GM12878 (cell line): ENCODE measurements at regions of chr11 and their contacts with region 1.

Region 1: DNA sequence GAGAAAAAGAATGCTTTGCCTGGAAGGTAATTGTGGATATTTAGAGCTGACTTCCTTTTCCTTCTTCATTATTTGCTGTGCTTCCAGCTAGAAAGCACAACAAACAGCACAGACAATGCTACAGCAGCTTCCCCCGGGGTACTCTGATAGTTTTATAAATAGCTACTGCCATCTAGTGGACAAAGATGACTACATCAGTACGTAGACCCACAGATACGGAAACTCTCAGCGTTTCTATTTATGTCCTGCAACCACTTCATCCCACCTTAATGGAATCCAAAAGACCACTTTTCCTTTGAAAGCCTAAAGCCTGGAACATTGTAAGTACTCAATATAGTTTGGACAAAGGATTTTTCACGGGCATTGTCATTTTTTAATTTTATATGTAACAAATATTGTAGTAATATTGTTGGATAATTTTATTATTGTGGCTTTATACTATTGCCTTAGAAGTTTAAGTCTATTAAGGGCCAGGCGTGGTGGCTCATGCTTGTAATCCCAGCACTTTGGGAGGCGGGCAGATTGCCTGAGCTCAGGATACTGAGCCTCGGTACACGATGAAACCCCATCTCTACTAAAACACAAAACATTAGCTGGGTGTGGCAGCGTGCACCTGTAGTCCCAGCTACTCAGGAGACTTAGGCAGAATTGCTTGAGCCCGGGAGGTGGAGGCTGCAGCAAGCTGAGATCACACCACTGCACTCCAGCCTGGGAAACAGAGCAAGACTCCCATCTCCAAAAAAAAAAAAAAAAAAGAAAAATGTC is 7.5 kb downstream of the HSPA8 start:
- DNase-seq: no peak
- ATAC-seq: peak; percentile 87
- H3K4me3 ChIP-seq: no peak overlapping the region
- H3K27ac ChIP-seq: no peak overlapping the region
- H3K4me1 ChIP-seq: no peaks in the 10 kb centered on the region; the same call in 1 of the 2 replicates
- H3K27me3 ChIP-seq: no peaks in the 10 kb centered on the region
- CTCF ChIP-seq: peak; percentile 61 to 74 (median 63)
- EP300 ChIP-seq: no peak
- POLR2A ChIP-seq: no peak
- RAD21 ChIP-seq: peak; percentile 58

Region 2: DNA sequence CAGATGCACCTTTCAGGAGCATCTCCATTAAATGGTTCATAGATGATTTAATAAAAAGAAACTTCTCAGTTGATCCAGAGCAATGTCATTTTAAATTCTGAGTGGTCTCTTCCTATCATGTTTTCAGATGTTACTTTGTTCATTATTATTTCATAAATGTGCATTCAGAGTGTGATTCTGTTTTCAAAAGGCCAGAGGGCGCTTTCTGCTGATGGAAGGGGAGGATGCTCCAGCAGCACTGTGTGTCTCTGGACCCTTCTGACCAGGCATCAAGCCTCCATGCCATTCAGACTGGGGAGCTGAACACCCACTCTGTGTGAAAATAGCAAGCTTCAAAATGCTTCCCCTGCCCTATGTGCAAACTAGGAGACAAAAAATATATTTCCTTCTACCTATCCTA is 240.1 kb before region 1 on chr11:
- CTCF ChIA-PET with region 1: interaction called, 25 read pairs
- POLR2A ChIA-PET with region 1: no interaction called
- RAD21 ChIA-PET with region 1: interaction called, 12 read pairs
- SMC1A ChIA-PET with region 1: interaction called, 8 read pairs
- in situ Hi-C with region 1: no loop called
- intact Hi-C with region 1: no loop called
- DNase-seq: no peak
- ATAC-seq: peak; percentile 93
- H3K4me3 ChIP-seq: no peak overlapping the region
- H3K27ac ChIP-seq: no peak overlapping the region
- H3K4me1 ChIP-seq: no peaks in the 10 kb centered on the region; the same call in 1 of the 2 replicates
- H3K27me3 ChIP-seq: no peaks in the 10 kb centered on the region
- CTCF ChIP-seq: peak; percentile 22 to 51 (median 28); a peak in 3 of 6 replicates
- EP300 ChIP-seq: no peak
- POLR2A ChIP-seq: no peak
- RAD21 ChIP-seq: peak; percentile 60

Region 3: DNA sequence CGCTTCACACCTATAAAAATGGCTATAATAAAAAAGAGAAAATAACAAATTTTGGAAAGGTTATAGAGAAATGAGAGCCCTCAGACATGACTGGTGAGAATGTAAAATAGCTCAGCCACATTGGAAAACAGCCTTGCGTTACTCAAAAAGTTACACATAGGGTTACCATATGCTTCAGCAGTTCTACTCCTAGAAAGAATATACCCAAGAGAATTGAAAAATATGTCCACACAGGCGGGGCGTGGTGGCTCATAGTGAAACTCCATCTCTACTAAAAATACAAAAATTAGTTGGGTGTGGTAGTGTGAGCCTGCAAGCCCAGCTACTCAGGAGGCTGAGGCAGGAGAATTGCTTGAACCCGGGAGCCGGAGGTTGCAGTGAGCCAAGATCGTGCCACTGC is 179.5 kb before region 1 on chr11:
- CTCF ChIA-PET with region 1: interaction called, 12 read pairs
- POLR2A ChIA-PET with region 1: interaction called, 10 read pairs
- RAD21 ChIA-PET with region 1: interaction called, 12 read pairs
- SMC1A ChIA-PET with region 1: interaction called, 14 read pairs
- in situ Hi-C with region 1: no loop called
- intact Hi-C with region 1: no loop called
- DNase-seq: peak; percentile 52
- ATAC-seq: peak; percentile 79
- H3K4me3 ChIP-seq: 0 out of 2 replicates have a peak overlapping the region, but pooled peaks have one; percentile 25
- H3K27ac ChIP-seq: no peak overlapping the region
- H3K4me1 ChIP-seq: peaks cover 3% of the 10 kb centered on the region; the same call in 1 of the 2 replicates
- H3K27me3 ChIP-seq: no peaks in the 10 kb centered on the region
- CTCF ChIP-seq: no peak
- EP300 ChIP-seq: no peak
- POLR2A ChIP-seq: no peak
- RAD21 ChIP-seq: no peak

Region 4: GRCh38 chr11:123069908-123070821 is 15.7 kb after region 1 on chr11:
- CTCF ChIA-PET with region 1: interaction called, 41 read pairs
- POLR2A ChIA-PET with region 1: interaction called, 15 read pairs
- RAD21 ChIA-PET with region 1: interaction called, 12 read pairs
- SMC1A ChIA-PET with region 1: interaction called, 25 read pairs
- in situ Hi-C with region 1: no loop called
- intact Hi-C with region 1: no loop called
- DNase-seq: no peak
- ATAC-seq: peak; percentile 72
- H3K4me3 ChIP-seq: peak overlapping the region; percentile 57
- H3K27ac ChIP-seq: peak overlapping the region; percentile 91
- H3K4me1 ChIP-seq: peaks cover 36% of the 10 kb centered on the region
- H3K27me3 ChIP-seq: no peaks in the 10 kb centered on the region
- CTCF ChIP-seq: no peak
- EP300 ChIP-seq: peak; percentile 50 to 78; a peak in 2 of 4 replicates
- POLR2A ChIP-seq: no peak
- RAD21 ChIP-seq: no peak

Region 5: GRCh38 chr11:123110356-123110755 is 55.9 kb after region 1 on chr11:
- CTCF ChIA-PET with region 1: interaction called, 33 read pairs
- POLR2A ChIA-PET with region 1: no interaction called
- RAD21 ChIA-PET with region 1: interaction called, 4 read pairs
- SMC1A ChIA-PET with region 1: interaction called, 8 read pairs
- in situ Hi-C with region 1: no loop called
- intact Hi-C with region 1: no loop called
- DNase-seq: no peak
- ATAC-seq: no peak
- H3K4me3 ChIP-seq: no peak overlapping the region
- H3K27ac ChIP-seq: no peak overlapping the region
- H3K4me1 ChIP-seq: no peaks in the 10 kb centered on the region
- H3K27me3 ChIP-seq: peaks cover 0 to 3% of the 10 kb centered on the region in 2 experiments; a peak in 2 of 4 replicates
- CTCF ChIP-seq: no peak
- EP300 ChIP-seq: no peak
- POLR2A ChIP-seq: no peak
- RAD21 ChIP-seq: no peak